CD4-positive, alpha-beta memory T cell (primary cell): ENCODE measurements at regions of chr6 and their contacts with region 1.

Region 1: GRCh38 chr6:131199568-131200272 is 64.5 kb downstream of the AKAP7 start:
- DNase-seq: peak; percentile 83 to 90 (median 87)
- H3K4me3 ChIP-seq: peak overlapping the region in 1 of 2 donors; percentile 54
- H3K4me3 Mint-ChIP-seq: peak overlapping the region; percentile 66 to 88 (median 82)
- H3K27ac ChIP-seq: peak overlapping the region; percentile 66
- H3K27ac Mint-ChIP-seq: peak overlapping the region; percentile 90 to 97 (median 95)
- H3K4me1 ChIP-seq: peaks cover 64% of the 10 kb centered on the region
- H3K4me1 Mint-ChIP-seq: peaks cover 43 to 62% (median 52%) of the 10 kb centered on the region in 4 donors
- H3K27me3 ChIP-seq: no peaks in the 10 kb centered on the region
- H3K27me3 Mint-ChIP-seq: no peaks in the 10 kb centered on the region

Region 2: DNA sequence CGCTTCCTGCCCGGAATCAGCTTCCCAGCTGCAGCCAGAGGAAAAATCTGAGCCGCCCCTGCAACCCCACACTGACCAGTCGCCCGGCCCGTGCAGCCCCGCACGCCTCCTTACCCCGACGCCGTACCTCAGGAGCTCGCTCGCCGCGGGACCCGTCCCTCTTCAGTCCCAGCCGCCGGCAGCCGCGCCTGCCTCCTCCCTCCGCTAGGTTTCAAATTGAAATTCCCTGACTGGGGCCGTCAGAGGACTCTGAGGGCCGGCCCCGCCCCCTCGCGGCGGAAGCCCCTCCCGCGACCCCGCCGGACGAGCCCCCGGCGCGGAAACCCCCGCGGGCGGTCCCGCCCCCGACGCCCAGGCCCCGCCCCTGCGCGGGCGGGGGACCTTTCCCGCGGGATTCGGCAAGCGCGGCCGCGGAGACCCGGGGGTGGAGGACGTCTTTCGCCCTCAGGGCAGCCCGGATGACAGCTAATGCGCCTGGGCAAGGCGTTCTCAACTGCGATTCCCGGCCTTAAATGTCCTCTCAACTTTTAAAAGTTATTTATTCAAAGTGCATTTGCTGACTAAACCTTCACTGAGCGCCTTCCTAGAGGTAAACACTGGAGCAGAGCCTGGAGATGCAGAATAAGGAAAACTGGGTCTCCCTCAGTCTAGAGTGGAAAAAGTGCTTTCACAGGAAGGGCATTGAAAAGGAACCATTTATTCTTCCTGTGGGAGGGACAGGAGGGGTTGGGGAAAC is 136.5 kb before region 1 on chr6 and contains the start of gene EPB41L2:
- CTCF ChIA-PET with region 1: interaction called, 4 read pairs
- POLR2A ChIA-PET with region 1: no interaction called
- intact Hi-C with region 1: loop called (anchors 2 kb)
- DNase-seq: peak; percentile 76 to 81 (median 78)
- H3K4me3 ChIP-seq: peak within 1 kb of the TSS; percentile 54 to 59
- H3K4me3 Mint-ChIP-seq: peak within 1 kb of the TSS; percentile 82 to 88 (median 86)
- H3K27ac ChIP-seq: peak within 1 kb of the TSS; percentile 38
- H3K27ac Mint-ChIP-seq: peak within 1 kb of the TSS; percentile 12 to 92 (median 81)
- H3K4me1 ChIP-seq: peaks cover 15% of the 10 kb centered on the region
- H3K4me1 Mint-ChIP-seq: peaks cover 18 to 36% (median 25%) of the 10 kb centered on the region in 4 donors
- H3K27me3 ChIP-seq: no peaks in the 10 kb centered on the region
- H3K27me3 Mint-ChIP-seq: no peaks in the 10 kb centered on the region
- total RNA-seq, gene EPB41L2: 18.4 to 24.3 TPM

Region 3: DNA sequence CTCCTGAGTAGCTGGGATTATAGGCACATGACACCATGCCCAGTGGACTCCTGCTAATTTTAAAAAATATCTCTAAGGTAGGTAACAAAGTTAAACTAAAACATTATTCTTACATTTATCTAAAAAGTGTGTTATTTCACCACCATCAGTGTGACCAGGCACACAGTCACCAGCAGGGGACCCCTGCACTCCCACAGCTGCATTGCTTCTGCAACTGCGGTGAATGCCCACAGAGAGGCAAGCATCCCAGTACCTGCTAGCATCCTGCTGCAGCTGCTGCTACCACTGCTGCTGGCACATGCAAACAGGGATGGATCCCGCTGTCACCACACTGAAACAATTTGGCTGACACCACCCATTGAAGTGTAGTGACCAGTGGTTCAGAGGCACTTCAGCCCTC is 114.7 kb before region 1 on chr6:
- CTCF ChIA-PET with region 1: no interaction called
- POLR2A ChIA-PET with region 1: no interaction called
- intact Hi-C with region 1: no loop called
- DNase-seq: no peak
- H3K4me3 ChIP-seq: no peak overlapping the region
- H3K4me3 Mint-ChIP-seq: no peak overlapping the region
- H3K27ac ChIP-seq: no peak overlapping the region
- H3K27ac Mint-ChIP-seq: no peak overlapping the region
- H3K4me1 ChIP-seq: no peaks in the 10 kb centered on the region
- H3K4me1 Mint-ChIP-seq: no peaks in the 10 kb centered on the region
- H3K27me3 ChIP-seq: no peaks in the 10 kb centered on the region
- H3K27me3 Mint-ChIP-seq: peaks cover 13 to 23% of the 10 kb centered on the region in 2 donors

Region 4: DNA sequence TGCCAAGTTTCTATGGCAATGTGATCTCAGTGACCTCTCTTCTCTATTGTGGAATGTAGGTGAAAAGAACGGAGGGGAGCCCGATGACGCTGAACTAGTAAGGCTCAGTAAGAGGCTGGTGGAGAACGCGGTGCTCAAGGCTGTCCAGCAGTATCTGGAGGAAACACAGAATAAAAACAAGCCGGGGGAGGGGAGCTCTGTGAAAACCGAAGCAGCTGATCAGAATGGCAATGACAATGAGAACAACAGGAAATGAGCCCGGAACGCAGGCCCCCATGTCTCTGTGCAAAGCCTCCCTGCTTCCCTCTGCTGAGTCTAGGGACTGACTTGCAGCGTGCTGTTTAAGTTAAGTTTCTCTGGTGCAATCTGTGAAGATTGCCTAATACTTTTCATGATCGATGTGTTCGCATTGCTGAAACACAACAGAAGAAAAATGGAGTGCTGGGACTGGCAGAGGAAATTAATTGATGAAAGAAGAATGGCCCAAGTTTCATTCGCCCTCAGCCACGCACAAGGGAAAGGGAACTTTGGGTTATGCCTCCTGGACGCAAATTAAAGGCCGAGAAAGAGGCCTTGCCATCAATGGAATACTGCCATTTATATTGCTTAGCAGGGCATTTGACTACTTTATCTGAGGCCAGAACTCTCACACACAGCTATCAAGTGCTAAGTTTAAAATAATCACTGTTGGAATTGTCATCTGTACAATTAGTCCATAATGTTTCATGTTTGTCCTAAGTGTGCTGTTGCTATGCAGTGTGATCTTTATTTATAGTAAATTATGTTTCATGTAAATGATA is 82.0 kb after region 1 on chr6:
- CTCF ChIA-PET with region 1: interaction called, 25 read pairs
- POLR2A ChIA-PET with region 1: interaction called, 80 read pairs
- intact Hi-C with region 1: loop called (anchors 1 kb)
- DNase-seq: peak; percentile 69 to 77 (median 74)
- H3K4me3 ChIP-seq: peak overlapping the region in 1 of 2 donors; percentile 48
- H3K4me3 Mint-ChIP-seq: peak overlapping the region; percentile 80 to 95 (median 90)
- H3K27ac ChIP-seq: peak overlapping the region; percentile 53
- H3K27ac Mint-ChIP-seq: peak overlapping the region; percentile 94 to 98 (median 97)
- H3K4me1 ChIP-seq: peaks cover 34% of the 10 kb centered on the region
- H3K4me1 Mint-ChIP-seq: peaks cover 27 to 50% (median 38%) of the 10 kb centered on the region in 4 donors
- H3K27me3 ChIP-seq: no peaks in the 10 kb centered on the region
- H3K27me3 Mint-ChIP-seq: no peaks in the 10 kb centered on the region

Region 5: GRCh38 chr6:131460614-131461000 is 260.9 kb after region 1 on chr6:
- CTCF ChIA-PET with region 1: interaction called, 3 read pairs
- POLR2A ChIA-PET with region 1: interaction called, 6 read pairs
- intact Hi-C with region 1: loop called (anchors 1 kb)
- DNase-seq: no peak
- H3K4me3 ChIP-seq: no peak overlapping the region
- H3K4me3 Mint-ChIP-seq: no peak overlapping the region
- H3K27ac ChIP-seq: no peak overlapping the region
- H3K27ac Mint-ChIP-seq: no peak overlapping the region
- H3K4me1 ChIP-seq: peaks cover 4% of the 10 kb centered on the region
- H3K4me1 Mint-ChIP-seq: peaks cover 7 to 8% (median 7%) of the 10 kb centered on the region in 4 donors
- H3K27me3 ChIP-seq: no peaks in the 10 kb centered on the region
- H3K27me3 Mint-ChIP-seq: no peaks in the 10 kb centered on the region

Region 6: DNA sequence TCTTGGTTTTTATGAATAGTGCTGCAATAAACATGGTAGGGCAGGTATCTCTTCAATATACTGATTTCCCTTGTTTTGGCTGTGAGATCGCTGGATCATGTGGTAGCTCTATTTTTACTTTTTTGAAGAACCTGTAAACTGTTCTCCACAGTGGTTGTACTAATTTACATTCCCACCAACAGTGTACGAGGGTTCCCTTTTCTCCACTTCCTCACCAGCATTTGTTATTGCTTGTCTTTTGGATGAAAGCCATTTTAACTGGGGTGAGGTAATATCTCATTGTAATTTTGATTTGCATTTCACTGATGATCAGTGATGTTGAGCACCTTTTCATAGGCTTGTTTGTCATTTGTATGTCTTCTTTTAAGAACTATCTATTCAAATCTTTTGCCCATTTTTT is 365.3 kb after region 1 on chr6:
- CTCF ChIA-PET with region 1: no interaction called
- POLR2A ChIA-PET with region 1: no interaction called
- intact Hi-C with region 1: no loop called
- DNase-seq: no peak
- H3K4me3 ChIP-seq: no peak overlapping the region
- H3K4me3 Mint-ChIP-seq: no peak overlapping the region
- H3K27ac ChIP-seq: no peak overlapping the region
- H3K27ac Mint-ChIP-seq: no peak overlapping the region
- H3K4me1 ChIP-seq: no peaks in the 10 kb centered on the region
- H3K4me1 Mint-ChIP-seq: peaks cover 0 to 7% (median 2%) of the 10 kb centered on the region in 4 donors
- H3K27me3 ChIP-seq: no peaks in the 10 kb centered on the region
- H3K27me3 Mint-ChIP-seq: no peaks in the 10 kb centered on the region

Region 7: DNA sequence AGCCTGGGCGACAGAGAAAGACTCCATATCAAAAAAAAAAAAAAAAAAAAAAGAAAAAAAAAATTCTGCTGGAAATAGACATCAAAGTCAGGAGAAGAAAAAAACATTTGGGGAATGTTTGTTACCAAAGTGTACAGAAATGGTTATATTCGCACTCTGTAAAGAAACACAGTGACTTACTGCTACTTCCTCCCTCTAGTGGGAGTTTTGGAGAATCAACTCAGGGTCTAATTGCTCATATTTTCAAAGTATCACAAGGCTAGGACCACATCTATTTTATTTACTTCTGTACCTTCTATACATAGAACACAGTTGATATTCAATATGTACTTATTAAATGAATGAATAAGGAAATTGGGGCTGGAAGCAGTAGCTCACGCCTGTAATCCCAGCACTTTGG is 397.7 kb after region 1 on chr6:
- CTCF ChIA-PET with region 1: interaction called, 3 read pairs
- POLR2A ChIA-PET with region 1: no interaction called
- intact Hi-C with region 1: loop called (anchors 2 kb)
- DNase-seq: peak in 2 of 5 donors; percentile 8 to 11
- H3K4me3 ChIP-seq: no peak overlapping the region
- H3K4me3 Mint-ChIP-seq: no peak overlapping the region
- H3K27ac ChIP-seq: no peak overlapping the region
- H3K27ac Mint-ChIP-seq: no peak overlapping the region
- H3K4me1 ChIP-seq: no peaks in the 10 kb centered on the region
- H3K4me1 Mint-ChIP-seq: peaks cover 0 to 2% (median under 1%) of the 10 kb centered on the region in 4 donors
- H3K27me3 ChIP-seq: no peaks in the 10 kb centered on the region
- H3K27me3 Mint-ChIP-seq: no peaks in the 10 kb centered on the region